ENCODE measurements at regions of chr16 and their contacts with region 1.

Region 1: GRCh38 chr16:75647492-75648264 is at the starts of genes KARS1 and TERF2IP:
- DNase-seq: peak; percentile 91 to 96 (median 94)
- ATAC-seq: peak; percentile 93
- H3K4me3 ChIP-seq: peak within 1 kb of the TSS; percentile 96
- H3K27ac ChIP-seq: peak within 1 kb of the TSS; percentile 93
- H3K4me1 ChIP-seq: peaks cover 15 to 24% of the 10 kb centered on the region in 2 experiments; a peak in 4 of 5 replicates
- H3K27me3 ChIP-seq: no peaks in the 10 kb centered on the region
- CTCF ChIP-seq: no peak
- EP300 ChIP-seq: no peak
- POLR2A ChIP-seq: peak; percentile 96
- RAD21 ChIP-seq: no peak
- polyA plus RNA-seq, gene KARS1: 223 to 313 TPM
- polyA plus RNA-seq, gene TERF2IP: 14.5 to 14.8 TPM

Region 2: GRCh38 chr16:75406945-75407344 is 240.7 kb before region 1 on chr16:
- CTCF ChIA-PET with region 1: no interaction called
- POLR2A ChIA-PET with region 1: no interaction called
- in situ Hi-C with region 1: no loop called
- intact Hi-C with region 1: no loop called
- DNase-seq: no peak
- ATAC-seq: no peak
- H3K4me3 ChIP-seq: no peak overlapping the region
- H3K27ac ChIP-seq: no peak overlapping the region
- H3K4me1 ChIP-seq: no peaks in the 10 kb centered on the region; a peak in 1 of 5 replicates
- H3K27me3 ChIP-seq: no peaks in the 10 kb centered on the region
- CTCF ChIP-seq: no peak
- EP300 ChIP-seq: no peak
- POLR2A ChIP-seq: no peak
- RAD21 ChIP-seq: no peak

Region 3: GRCh38 chr16:75632857-75633256 is 14.8 kb before region 1 on chr16:
- CTCF ChIA-PET with region 1: no interaction called
- POLR2A ChIA-PET with region 1: interaction called, 43 read pairs
- in situ Hi-C with region 1: no loop called
- intact Hi-C with region 1: no loop called
- DNase-seq: no peak
- ATAC-seq: no peak
- H3K4me3 ChIP-seq: no peak overlapping the region
- H3K27ac ChIP-seq: no peak overlapping the region
- H3K4me1 ChIP-seq: peaks cover 0 to 6% of the 10 kb centered on the region in 2 experiments; a peak in 2 of 5 replicates
- H3K27me3 ChIP-seq: no peaks in the 10 kb centered on the region
- CTCF ChIP-seq: no peak
- EP300 ChIP-seq: no peak
- POLR2A ChIP-seq: no peak
- RAD21 ChIP-seq: no peak

Region 4: GRCh38 chr16:75660321-75660720 is 12.6 kb after region 1 on chr16:
- CTCF ChIA-PET with region 1: no interaction called
- POLR2A ChIA-PET with region 1: interaction called, 21 read pairs
- in situ Hi-C with region 1: no loop called
- intact Hi-C with region 1: no loop called
- DNase-seq: no peak
- ATAC-seq: no peak
- H3K4me3 ChIP-seq: no peak overlapping the region
- H3K27ac ChIP-seq: no peak overlapping the region
- H3K4me1 ChIP-seq: no peaks in the 10 kb centered on the region
- H3K27me3 ChIP-seq: no peaks in the 10 kb centered on the region
- CTCF ChIP-seq: no peak
- EP300 ChIP-seq: no peak
- POLR2A ChIP-seq: no peak
- RAD21 ChIP-seq: no peak

Region 5: DNA sequence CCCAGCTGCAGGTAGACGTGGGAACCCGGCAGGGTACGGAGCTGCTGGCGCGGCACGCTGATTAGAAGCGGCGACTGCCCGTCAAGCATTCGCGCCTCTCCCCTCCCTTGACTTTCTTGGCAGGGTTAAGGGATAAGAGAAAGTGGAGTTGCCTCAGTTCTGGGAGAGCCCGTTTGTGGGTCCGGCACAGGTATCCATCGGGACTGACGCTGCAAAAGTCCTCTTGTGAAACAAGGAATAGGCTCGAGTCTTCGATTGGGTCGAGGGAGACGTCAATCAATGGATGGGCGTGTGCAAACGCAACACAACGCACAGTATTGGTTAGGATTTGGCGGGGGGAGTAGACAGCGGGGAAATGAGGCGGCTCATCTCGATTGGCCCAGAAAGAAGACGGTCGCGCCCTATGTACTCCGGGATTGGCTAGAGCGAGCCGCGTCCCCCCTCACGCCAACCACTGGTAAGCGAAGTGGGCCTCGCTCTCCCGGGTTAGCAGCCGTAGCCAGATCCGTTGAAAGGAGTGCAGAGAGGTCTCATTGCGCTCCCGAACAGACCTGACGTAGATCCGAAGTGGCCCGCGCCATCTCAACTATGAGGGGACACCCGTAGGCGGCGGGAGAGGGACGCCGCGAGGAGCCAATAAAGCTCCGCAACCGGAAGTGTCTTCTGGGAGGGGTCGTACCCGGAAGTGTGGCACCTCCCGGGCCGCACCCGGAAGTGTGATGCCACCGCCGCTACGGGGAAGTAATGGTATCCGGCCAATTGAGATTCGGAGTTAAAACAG is 1543.0 kb after region 1 on chr16 and contains the start of gene MON1B:
- CTCF ChIA-PET with region 1: no interaction called
- POLR2A ChIA-PET with region 1: no interaction called
- in situ Hi-C with region 1: loop called (anchors 25 kb)
- intact Hi-C with region 1: no loop called
- DNase-seq: peak; percentile 95 to 99 (median 96)
- ATAC-seq: peak; percentile 99
- H3K4me3 ChIP-seq: peak within 1 kb of the TSS; percentile 84
- H3K27ac ChIP-seq: peak within 1 kb of the TSS; percentile 99
- H3K4me1 ChIP-seq: peaks cover 9 to 17% of the 10 kb centered on the region in 2 experiments; a peak in 3 of 5 replicates
- H3K27me3 ChIP-seq: no peaks in the 10 kb centered on the region
- CTCF ChIP-seq: peak in 1 of 3 experiments; percentile 9; a peak in 1 of 6 replicates
- EP300 ChIP-seq: no peak
- POLR2A ChIP-seq: peak; percentile 90
- RAD21 ChIP-seq: no peak
- polyA plus RNA-seq, gene MON1B: 5.0 to 5.4 TPM